Activated CD4-positive, alpha-beta T cell treated with anti-CD3 and anti-CD28 coated beads for 36 hours (primary cell): ENCODE measurements at regions of chr5 and their contacts with region 1.

Region 1: DNA sequence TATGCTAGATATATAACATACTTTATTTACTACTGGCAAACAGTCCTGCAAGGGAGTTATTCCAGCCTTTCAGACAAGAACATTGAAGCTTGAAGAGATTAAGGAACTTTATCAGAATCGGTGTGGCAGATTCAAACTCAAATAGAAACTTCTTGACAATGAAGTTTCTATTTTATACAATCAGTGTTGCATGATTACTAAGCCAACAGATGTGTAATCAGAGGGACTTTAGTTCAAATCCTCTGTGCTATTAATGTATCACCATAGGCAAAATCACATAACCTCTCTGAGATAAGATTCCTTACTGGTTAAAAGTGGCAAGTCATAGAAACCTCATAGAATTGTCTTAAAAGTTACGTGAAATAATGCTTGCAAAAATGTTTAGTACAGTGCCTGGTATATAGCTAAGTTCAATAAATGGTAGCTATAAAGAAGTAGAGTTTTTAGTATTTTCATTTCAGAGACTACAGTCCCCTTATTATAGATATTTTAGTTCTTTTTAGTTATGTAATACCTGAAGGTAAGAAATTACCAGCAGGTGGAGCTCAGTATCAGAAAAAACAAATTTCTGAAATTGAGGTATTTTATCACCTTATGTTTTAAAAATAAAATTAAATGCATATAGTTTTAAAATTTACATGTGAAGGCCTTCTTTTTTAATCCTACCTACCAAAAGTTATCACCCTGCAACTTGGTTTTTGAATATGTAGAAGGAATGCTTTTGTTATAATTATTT is 172.1 kb downstream of the FER start:
- DNase-seq: no peak
- ATAC-seq: peak; percentile 26
- H3K4me3 Mint-ChIP-seq: no peak overlapping the region
- H3K27ac Mint-ChIP-seq: no peak overlapping the region
- H3K4me1 Mint-ChIP-seq: peaks cover 4% of the 10 kb centered on the region
- H3K27me3 Mint-ChIP-seq: no peaks in the 10 kb centered on the region

Region 2: DNA sequence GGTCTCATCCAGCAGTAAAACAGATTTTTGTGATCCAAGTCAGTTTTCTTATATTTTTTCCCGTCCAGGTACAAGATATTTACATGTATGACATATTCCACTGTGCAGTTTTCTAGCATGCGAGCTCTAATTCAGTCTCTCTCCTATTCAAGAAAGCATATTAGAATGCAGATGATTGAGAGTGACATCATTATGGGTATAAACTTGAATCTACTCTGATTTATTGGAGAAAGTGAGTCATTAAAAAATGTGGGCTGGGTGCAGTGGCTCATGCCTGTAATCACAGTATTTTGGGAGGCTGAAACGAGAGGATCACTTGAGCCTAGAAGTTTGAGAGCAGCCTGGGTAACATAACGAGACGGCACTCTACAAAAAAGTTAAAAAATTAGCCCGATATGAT is 165.9 kb before region 1 on chr5:
- CTCF ChIA-PET with region 1: no interaction called
- POLR2A ChIA-PET with region 1: no interaction called
- intact Hi-C with region 1: no loop called
- DNase-seq: peak; percentile 20
- ATAC-seq: peak; percentile 57
- H3K4me3 Mint-ChIP-seq: no peak overlapping the region
- H3K27ac Mint-ChIP-seq: no peak overlapping the region
- H3K4me1 Mint-ChIP-seq: peaks cover 16% of the 10 kb centered on the region
- H3K27me3 Mint-ChIP-seq: no peaks in the 10 kb centered on the region

Region 3: DNA sequence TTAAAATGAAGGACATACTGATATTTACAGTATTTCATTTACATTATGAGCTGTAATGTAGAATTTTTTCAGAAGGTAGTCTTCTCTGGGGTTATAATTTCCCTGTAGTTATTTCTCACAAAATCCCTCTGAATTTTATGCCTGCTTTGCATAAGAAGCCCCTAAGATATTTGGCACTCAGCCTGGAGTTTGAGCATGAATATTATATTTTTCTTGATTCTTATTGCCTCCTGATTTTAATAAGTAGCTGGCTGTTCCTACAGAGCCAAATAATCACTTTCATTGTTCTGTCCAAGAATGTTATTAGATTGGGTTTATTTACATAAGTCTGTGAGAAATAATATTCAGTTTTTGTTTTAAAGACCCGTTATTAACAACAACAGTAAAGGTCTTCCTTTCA is 22.9 kb after region 1 on chr5:
- CTCF ChIA-PET with region 1: no interaction called
- POLR2A ChIA-PET with region 1: no interaction called
- intact Hi-C with region 1: no loop called
- DNase-seq: no peak
- ATAC-seq: no peak
- H3K4me3 Mint-ChIP-seq: no peak overlapping the region
- H3K27ac Mint-ChIP-seq: no peak overlapping the region
- H3K4me1 Mint-ChIP-seq: no peaks in the 10 kb centered on the region
- H3K27me3 Mint-ChIP-seq: no peaks in the 10 kb centered on the region

Region 4: DNA sequence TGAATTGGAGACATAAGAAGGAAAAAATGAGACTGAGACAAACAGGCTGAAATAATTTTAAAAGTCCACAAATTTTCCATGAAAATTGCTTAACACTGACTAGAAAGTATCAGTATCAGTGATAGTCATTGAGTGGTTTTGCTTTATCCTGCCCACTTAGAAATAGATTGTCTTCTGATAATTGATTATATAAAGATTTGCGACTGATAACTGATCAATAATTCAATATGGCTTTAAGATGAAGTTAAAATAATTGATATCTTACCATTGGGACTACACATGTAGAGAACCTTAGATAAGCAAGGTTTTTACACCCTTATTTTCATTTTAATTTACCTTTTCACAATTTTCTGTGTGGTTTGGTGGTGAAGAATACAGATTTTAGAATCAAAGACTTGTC is 98.4 kb after region 1 on chr5:
- CTCF ChIA-PET with region 1: no interaction called
- POLR2A ChIA-PET with region 1: no interaction called
- intact Hi-C with region 1: no loop called
- DNase-seq: no peak
- ATAC-seq: no peak
- H3K4me3 Mint-ChIP-seq: no peak overlapping the region
- H3K27ac Mint-ChIP-seq: no peak overlapping the region
- H3K4me1 Mint-ChIP-seq: no peaks in the 10 kb centered on the region
- H3K27me3 Mint-ChIP-seq: no peaks in the 10 kb centered on the region

Region 5: GRCh38 chr5:109439590-109439989 is 519.8 kb after region 1 on chr5:
- CTCF ChIA-PET with region 1: interaction called, 4 read pairs
- POLR2A ChIA-PET with region 1: no interaction called
- intact Hi-C with region 1: loop called in 1 of 2 experiments (anchors 2 kb)
- DNase-seq: no peak
- ATAC-seq: no peak
- H3K4me3 Mint-ChIP-seq: no peak overlapping the region
- H3K27ac Mint-ChIP-seq: no peak overlapping the region
- H3K4me1 Mint-ChIP-seq: no peaks in the 10 kb centered on the region
- H3K27me3 Mint-ChIP-seq: no peaks in the 10 kb centered on the region

Region 6: GRCh38 chr5:110321117-110321516 is 1401.4 kb after region 1 on chr5:
- CTCF ChIA-PET with region 1: no interaction called
- POLR2A ChIA-PET with region 1: no interaction called
- intact Hi-C with region 1: loop called in 1 of 2 experiments (anchors 10 kb)
- DNase-seq: no peak
- ATAC-seq: peak; percentile 47
- H3K4me3 Mint-ChIP-seq: no peak overlapping the region
- H3K27ac Mint-ChIP-seq: no peak overlapping the region
- H3K4me1 Mint-ChIP-seq: no peaks in the 10 kb centered on the region
- H3K27me3 Mint-ChIP-seq: no peaks in the 10 kb centered on the region